ENCODE measurements at regions of chr2 and their contacts with region 1.

Region 1: GRCh38 chr2:183078465-183079138 is at the start of gene DUSP19:
- DNase-seq: peak; percentile 98 to 99
- H3K4me3 ChIP-seq: peak within 1 kb of the TSS; percentile 61
- H3K27ac ChIP-seq: peak within 1 kb of the TSS; percentile 45
- H3K4me1 ChIP-seq: peaks cover 13% of the 10 kb centered on the region
- H3K27me3 ChIP-seq: no peaks in the 10 kb centered on the region
- CTCF ChIP-seq: no peak
- total RNA-seq, gene DUSP19: 6.2 and 8.6 TPM in 2 replicates

Region 2: GRCh38 chr2:182826064-182826463 is 252.5 kb before region 1 on chr2:
- CTCF ChIA-PET with region 1: no interaction called
- POLR2A ChIA-PET with region 1: interaction called, 30 read pairs
- intact Hi-C with region 1: no loop called
- DNase-seq: no peak
- H3K4me3 ChIP-seq: no peak overlapping the region
- H3K27ac ChIP-seq: no peak overlapping the region
- H3K4me1 ChIP-seq: no peaks in the 10 kb centered on the region
- H3K27me3 ChIP-seq: no peaks in the 10 kb centered on the region
- CTCF ChIP-seq: no peak

Region 3: GRCh38 chr2:182941919-182942318 is 136.7 kb before region 1 on chr2:
- CTCF ChIA-PET with region 1: no interaction called
- POLR2A ChIA-PET with region 1: interaction called, 14 read pairs
- intact Hi-C with region 1: no loop called
- DNase-seq: no peak
- H3K4me3 ChIP-seq: no peak overlapping the region
- H3K27ac ChIP-seq: no peak overlapping the region
- H3K4me1 ChIP-seq: no peaks in the 10 kb centered on the region
- H3K27me3 ChIP-seq: no peaks in the 10 kb centered on the region
- CTCF ChIP-seq: no peak

Region 4: GRCh38 chr2:183038341-183039300 is 40.0 kb before region 1 on chr2 and contains the start of gene NCKAP1:
- CTCF ChIA-PET with region 1: interaction called, 4 read pairs
- POLR2A ChIA-PET with region 1: interaction called, 4 read pairs
- intact Hi-C with region 1: loop called (anchors 1 kb)
- DNase-seq: peak; percentile 79 to 99
- H3K4me3 ChIP-seq: peak within 1 kb of the TSS; percentile 91
- H3K27ac ChIP-seq: peak within 1 kb of the TSS; percentile 87
- H3K4me1 ChIP-seq: peaks cover 35% of the 10 kb centered on the region
- H3K27me3 ChIP-seq: no peaks in the 10 kb centered on the region
- CTCF ChIP-seq: peak; percentile 73
- total RNA-seq, gene NCKAP1: 274 and 308 TPM in 2 replicates

Region 5: GRCh38 chr2:183124222-183124956 is 45.8 kb after region 1 on chr2 and contains the start of gene NUP35:
- CTCF ChIA-PET with region 1: no interaction called
- POLR2A ChIA-PET with region 1: no interaction called
- intact Hi-C with region 1: loop called (anchors 1 kb)
- DNase-seq: peak; percentile 94
- H3K4me3 ChIP-seq: peak within 1 kb of the TSS; percentile 62
- H3K27ac ChIP-seq: peak within 1 kb of the TSS; percentile 82
- H3K4me1 ChIP-seq: peaks cover 30% of the 10 kb centered on the region
- H3K27me3 ChIP-seq: no peaks in the 10 kb centered on the region
- CTCF ChIP-seq: no peak
- total RNA-seq, gene NUP35: 27.0 and 35.5 TPM in 2 replicates

Region 6: GRCh38 chr2:183229386-183229785 is 150.8 kb after region 1 on chr2:
- CTCF ChIA-PET with region 1: no interaction called
- POLR2A ChIA-PET with region 1: no interaction called
- intact Hi-C with region 1: no loop called
- DNase-seq: no peak
- H3K4me3 ChIP-seq: no peak overlapping the region
- H3K27ac ChIP-seq: no peak overlapping the region
- H3K4me1 ChIP-seq: no peaks in the 10 kb centered on the region
- H3K27me3 ChIP-seq: no peaks in the 10 kb centered on the region
- CTCF ChIP-seq: no peak

Measured in PC-9 (cell line).